ENCODE measurements at regions of chr6 and their contacts with region 1.

Region 1: DNA sequence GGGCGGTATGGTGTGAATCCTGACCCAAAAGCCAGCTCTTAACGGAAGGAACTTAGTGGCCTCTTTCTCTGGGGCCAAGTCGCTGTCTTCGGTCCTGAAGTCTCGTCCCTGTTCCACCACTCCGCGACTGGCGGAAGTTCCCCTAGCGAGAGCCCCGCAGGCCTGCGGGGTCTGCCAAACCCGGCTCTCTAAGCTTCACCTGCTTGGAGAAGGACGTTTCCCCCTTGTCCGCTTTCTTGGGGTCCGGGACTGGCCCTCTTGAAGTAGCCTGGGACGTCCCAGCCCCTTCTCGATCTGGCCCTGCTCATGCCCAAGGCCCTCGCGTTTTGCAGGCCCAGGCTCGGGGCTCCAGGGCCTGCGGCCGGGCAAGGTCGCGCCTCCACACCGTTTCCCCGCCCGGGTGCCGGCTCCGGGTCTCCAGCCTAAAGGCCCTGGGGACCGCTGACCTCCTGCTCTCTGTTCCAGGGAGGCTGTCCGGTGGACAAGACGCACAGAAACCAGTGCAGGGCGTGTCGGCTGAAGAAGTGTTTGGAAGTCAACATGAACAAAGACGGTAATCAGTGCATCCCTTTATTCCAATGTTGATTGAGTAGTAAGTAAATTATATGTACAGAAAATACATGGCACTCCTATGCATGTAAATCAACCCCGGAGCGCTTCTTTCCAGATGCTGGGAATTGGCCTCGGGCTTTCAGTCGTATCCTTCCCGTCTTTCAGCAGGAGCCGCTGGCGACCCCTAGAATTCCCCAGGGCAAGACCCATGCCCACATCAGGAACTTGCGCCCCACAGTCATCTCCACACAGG is 8.8 kb downstream of the NR2E1 start:
- DNase-seq: peak; percentile 79
- H3K4me3 Mint-ChIP-seq: no peak overlapping the region
- H3K27ac Mint-ChIP-seq: no peak overlapping the region
- H3K4me1 Mint-ChIP-seq: peaks cover 7% of the 10 kb centered on the region
- H3K27me3 Mint-ChIP-seq: peaks cover 87% of the 10 kb centered on the region

Region 2: DNA sequence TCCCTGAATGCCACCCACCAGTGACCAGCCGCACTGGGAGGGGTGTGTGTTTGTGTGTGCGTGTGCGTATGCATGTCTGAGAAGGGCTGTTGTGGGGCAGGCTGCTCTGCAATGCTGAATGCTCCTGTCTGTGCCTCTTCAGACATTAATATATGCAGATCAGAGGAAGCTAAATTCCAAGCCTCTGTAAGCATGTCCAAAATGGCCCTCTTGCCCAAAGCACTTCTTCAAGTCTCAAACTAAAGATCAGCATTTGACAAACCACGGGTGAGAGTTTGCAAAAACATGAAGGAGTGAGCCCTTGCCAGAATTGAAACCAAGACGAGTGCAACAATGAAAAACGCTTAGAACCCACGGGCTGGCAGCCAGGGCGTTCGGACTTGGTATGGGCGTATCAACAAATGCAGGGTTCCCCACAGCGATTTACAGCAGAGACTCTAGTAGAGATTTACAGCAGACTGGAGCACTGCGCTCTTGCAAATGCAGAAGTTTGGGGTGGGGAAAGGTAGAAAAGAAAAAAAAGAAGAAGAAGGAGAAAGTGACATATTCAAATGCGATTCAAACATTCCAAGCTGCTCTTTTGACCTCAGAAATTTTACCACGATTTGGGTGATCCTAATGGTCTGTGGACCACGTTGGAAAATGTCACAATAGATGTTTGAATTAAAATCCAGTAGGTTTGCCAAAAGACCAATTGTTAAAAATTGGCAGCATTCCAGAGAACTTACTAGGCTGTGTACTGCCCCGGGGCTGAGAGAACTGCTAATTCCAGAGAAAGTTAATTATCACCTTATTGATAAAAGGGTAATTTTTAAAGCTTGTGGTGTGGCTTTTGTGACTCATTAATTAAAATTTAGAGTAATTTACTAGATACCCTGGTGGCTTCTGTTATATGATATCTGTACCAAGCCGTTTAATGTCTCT is 354.0 kb before region 1 on chr6:
- intact Hi-C with region 1: no loop called
- DNase-seq: peak; percentile 86
- H3K4me3 Mint-ChIP-seq: peak overlapping the region; percentile 80
- H3K27ac Mint-ChIP-seq: peak overlapping the region; percentile 95
- H3K4me1 Mint-ChIP-seq: peaks cover 82% of the 10 kb centered on the region
- H3K27me3 Mint-ChIP-seq: no peaks in the 10 kb centered on the region

Region 3: GRCh38 chr6:108492131-108492766 is 317.7 kb after region 1 on chr6:
- intact Hi-C with region 1: loop called (anchors 5 kb)
- DNase-seq: peak; percentile 58
- H3K4me3 Mint-ChIP-seq: no peak overlapping the region
- H3K27ac Mint-ChIP-seq: no peak overlapping the region
- H3K4me1 Mint-ChIP-seq: no peaks in the 10 kb centered on the region
- H3K27me3 Mint-ChIP-seq: peaks cover 20% of the 10 kb centered on the region

Measured in activated CD4-positive, alpha-beta T cell treated with anti-CD3 and anti-CD28 coated beads, Interleukin-2, amount 10 ng/mL, durations not matched to agents 24 days and 14 days (primary cell).